Ascending aorta (tissue), 2 donors: ENCODE measurements at regions of chr15 and their contacts with region 1.

Region 1: GRCh38 chr15:85380217-85380811 is at the start of gene AKAP13:
- DNase-seq: peak; percentile 96 to 98
- H3K4me3 ChIP-seq: peak within 1 kb of the TSS; percentile 80 to 90
- H3K27ac ChIP-seq: peak within 1 kb of the TSS; percentile 92
- H3K4me1 ChIP-seq: peaks cover 0 to 10% of the 10 kb centered on the region in 2 donors
- H3K27me3 ChIP-seq: no peaks in the 10 kb centered on the region
- CTCF ChIP-seq: no peak
- total RNA-seq, gene AKAP13: 74.3 TPM

Region 2: GRCh38 chr15:85354461-85354860 is 25.9 kb before region 1 on chr15:
- intact Hi-C with region 1: loop called (anchors 1 kb)
- DNase-seq: no peak
- H3K4me3 ChIP-seq: no peak overlapping the region
- H3K27ac ChIP-seq: no peak overlapping the region
- H3K4me1 ChIP-seq: peaks cover 3 to 5% of the 10 kb centered on the region in 2 donors
- H3K27me3 ChIP-seq: no peaks in the 10 kb centered on the region
- CTCF ChIP-seq: no peak

Region 3: DNA sequence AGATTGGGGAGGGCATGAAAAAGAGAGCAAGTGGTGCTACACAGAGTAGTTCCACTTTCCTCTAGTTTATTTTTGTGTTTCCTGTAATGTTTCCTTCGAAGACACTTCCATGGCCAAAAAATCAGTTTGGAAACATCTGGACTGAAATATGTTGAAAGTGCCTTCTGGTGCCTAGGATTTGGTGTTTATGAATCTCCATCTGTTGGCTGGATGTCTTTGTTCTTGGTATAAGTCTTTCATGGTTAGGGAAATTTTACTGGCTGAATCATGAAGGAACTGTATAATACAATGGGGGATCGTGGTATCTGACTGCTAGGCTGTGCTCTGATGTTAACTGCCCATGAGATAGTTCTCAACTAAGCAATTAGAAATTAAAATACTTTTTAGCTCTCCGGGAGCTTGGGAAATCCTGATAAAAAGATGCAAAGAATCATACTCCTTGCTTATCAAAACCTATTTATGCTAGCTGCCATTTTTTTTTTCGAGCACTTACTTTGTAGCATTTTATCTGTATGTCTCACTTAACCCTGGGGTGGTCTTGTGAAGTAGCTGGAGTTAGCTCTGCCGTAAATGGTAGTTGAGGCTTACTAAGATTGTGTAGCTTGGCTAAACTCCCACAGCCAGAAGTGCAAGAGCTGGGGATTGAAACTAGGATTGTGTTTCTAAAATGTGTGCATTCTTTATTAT is 22.0 kb after region 1 on chr15:
- intact Hi-C with region 1: loop called (anchors 2 kb)
- DNase-seq: no peak
- H3K4me3 ChIP-seq: no peak overlapping the region
- H3K27ac ChIP-seq: peak overlapping the region; percentile 6 to 39
- H3K4me1 ChIP-seq: peaks cover 8 to 56% of the 10 kb centered on the region in 2 donors
- H3K27me3 ChIP-seq: no peaks in the 10 kb centered on the region
- CTCF ChIP-seq: no peak

Region 4: GRCh38 chr15:85421116-85421925 is 41.0 kb after region 1 on chr15:
- intact Hi-C with region 1: no loop called
- DNase-seq: no peak
- H3K4me3 ChIP-seq: no peak overlapping the region
- H3K27ac ChIP-seq: no peak overlapping the region
- H3K4me1 ChIP-seq: peaks cover 0 to 12% of the 10 kb centered on the region in 2 donors
- H3K27me3 ChIP-seq: no peaks in the 10 kb centered on the region
- CTCF ChIP-seq: no peak